Common myeloid progenitor, CD34-positive (primary cell): ENCODE measurements at regions of chr2 and their contacts with region 1.

Region 1: GRCh38 chr2:173210270-173211196 is 134.9 kb downstream of the MAP3K20 start:
- DNase-seq: peak; percentile 77 to 87 (median 85)
- H3K4me3 ChIP-seq: no peak overlapping the region
- H3K27ac ChIP-seq: no peak overlapping the region
- H3K4me1 ChIP-seq: peaks cover 0 to 3% (median 0%) of the 10 kb centered on the region in 4 experiments
- H3K27me3 ChIP-seq: no peaks in the 10 kb centered on the region

Region 2: DNA sequence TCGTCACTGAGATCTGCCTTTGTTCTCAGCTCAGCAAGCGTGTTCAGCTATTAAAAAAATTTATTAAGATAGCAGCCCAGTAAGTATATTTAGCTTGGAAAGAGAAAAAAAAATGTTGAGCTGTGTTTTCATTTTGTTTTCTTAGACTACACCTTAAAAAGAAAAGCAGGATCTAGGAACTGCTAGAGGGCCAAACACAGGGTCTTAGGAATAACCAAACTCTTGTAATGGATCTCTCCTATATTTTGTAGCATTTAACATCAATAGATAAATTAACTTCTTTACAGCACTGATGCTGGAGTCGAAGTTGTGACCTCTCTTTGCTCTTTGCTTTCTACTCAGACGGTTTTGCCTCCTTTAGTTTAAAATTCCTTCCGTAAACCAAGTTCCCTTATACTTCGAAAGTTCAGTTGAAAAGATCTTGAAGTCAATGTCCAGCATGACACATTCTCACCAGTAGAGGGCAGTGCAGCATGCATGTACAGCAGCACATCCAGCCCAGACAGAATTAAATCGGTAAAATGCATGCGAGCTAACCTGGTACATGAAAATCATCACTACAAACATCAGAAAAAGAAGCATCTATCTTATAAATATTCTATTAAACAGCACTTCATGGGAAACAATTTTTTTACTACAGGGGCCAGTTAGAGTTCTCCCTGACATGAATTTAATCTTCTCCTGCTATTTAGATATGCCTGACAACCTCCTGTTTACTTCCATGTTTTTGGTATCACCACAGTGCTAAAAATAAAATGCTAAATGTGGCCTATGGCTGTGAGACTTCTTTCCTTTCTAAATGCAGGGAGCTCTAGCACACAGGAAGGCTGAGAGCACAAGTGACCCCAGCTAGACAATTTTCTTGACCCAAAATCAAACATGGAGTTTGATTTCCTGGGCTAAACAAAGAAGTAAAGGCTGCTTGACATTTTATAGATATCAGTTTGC is 183.1 kb before region 1 on chr2:
- CTCF ChIA-PET with region 1: interaction called, 318 read pairs
- POLR2A ChIA-PET with region 1: no interaction called
- DNase-seq: peak; percentile 85 to 96 (median 92)
- H3K4me3 ChIP-seq: no peak overlapping the region
- H3K27ac ChIP-seq: no peak overlapping the region
- H3K4me1 ChIP-seq: peaks cover 0 to 3% (median 0%) of the 10 kb centered on the region in 4 experiments
- H3K27me3 ChIP-seq: peaks cover 0 to 6% (median 0%) of the 10 kb centered on the region in 5 experiments

Region 3: GRCh38 chr2:173048897-173049661 is 161.5 kb before region 1 on chr2:
- CTCF ChIA-PET with region 1: no interaction called
- POLR2A ChIA-PET with region 1: no interaction called
- DNase-seq: peak in 2 of 3 donors; percentile 41 to 48
- H3K4me3 ChIP-seq: no peak overlapping the region
- H3K27ac ChIP-seq: no peak overlapping the region
- H3K4me1 ChIP-seq: no peaks in the 10 kb centered on the region
- H3K27me3 ChIP-seq: no peaks in the 10 kb centered on the region

Region 4: GRCh38 chr2:173159794-173160463 is 50.6 kb before region 1 on chr2:
- CTCF ChIA-PET with region 1: no interaction called
- POLR2A ChIA-PET with region 1: no interaction called
- DNase-seq: peak in 2 of 3 donors; percentile 14 to 20
- H3K4me3 ChIP-seq: no peak overlapping the region
- H3K27ac ChIP-seq: no peak overlapping the region
- H3K4me1 ChIP-seq: peaks cover 0 to 2% (median 0%) of the 10 kb centered on the region in 4 experiments
- H3K27me3 ChIP-seq: no peaks in the 10 kb centered on the region

Region 5: GRCh38 chr2:173191601-173192000 is 18.9 kb before region 1 on chr2:
- CTCF ChIA-PET with region 1: no interaction called
- POLR2A ChIA-PET with region 1: no interaction called
- DNase-seq: no peak
- H3K4me3 ChIP-seq: no peak overlapping the region
- H3K27ac ChIP-seq: no peak overlapping the region
- H3K4me1 ChIP-seq: peaks cover 0 to 3% (median 0%) of the 10 kb centered on the region in 4 experiments
- H3K27me3 ChIP-seq: no peaks in the 10 kb centered on the region